Esophagus squamous epithelium (tissue), 5 donors: ENCODE measurements at regions of chrX and their contacts with region 1.

Region 1: GRCh38 chrX:12894074-12895030 is 12.1 kb upstream of the TLR8 start:
- DNase-seq: no peak
- H3K4me3 ChIP-seq: no peak overlapping the region
- H3K27ac ChIP-seq: no peak overlapping the region
- H3K4me1 ChIP-seq: no peaks in the 10 kb centered on the region
- H3K27me3 ChIP-seq: no peaks in the 10 kb centered on the region
- CTCF ChIP-seq: peak in 5 of 6 experiments; percentile 42 to 61 (median 52)
- POLR2A ChIP-seq: no peak

Region 2: GRCh38 chrX:12814420-12814819 is 79.9 kb before region 1 on chrX:
- intact Hi-C with region 1: loop called (anchors 10 kb)
- DNase-seq: no peak
- H3K4me3 ChIP-seq: no peak overlapping the region
- H3K27ac ChIP-seq: no peak overlapping the region
- H3K4me1 ChIP-seq: no peaks in the 10 kb centered on the region
- H3K27me3 ChIP-seq: no peaks in the 10 kb centered on the region
- CTCF ChIP-seq: peak in 5 of 6 experiments; percentile 19 to 61 (median 42)
- POLR2A ChIP-seq: no peak